ENCODE measurements at regions of chr7 and their contacts with region 1.

Region 1: DNA sequence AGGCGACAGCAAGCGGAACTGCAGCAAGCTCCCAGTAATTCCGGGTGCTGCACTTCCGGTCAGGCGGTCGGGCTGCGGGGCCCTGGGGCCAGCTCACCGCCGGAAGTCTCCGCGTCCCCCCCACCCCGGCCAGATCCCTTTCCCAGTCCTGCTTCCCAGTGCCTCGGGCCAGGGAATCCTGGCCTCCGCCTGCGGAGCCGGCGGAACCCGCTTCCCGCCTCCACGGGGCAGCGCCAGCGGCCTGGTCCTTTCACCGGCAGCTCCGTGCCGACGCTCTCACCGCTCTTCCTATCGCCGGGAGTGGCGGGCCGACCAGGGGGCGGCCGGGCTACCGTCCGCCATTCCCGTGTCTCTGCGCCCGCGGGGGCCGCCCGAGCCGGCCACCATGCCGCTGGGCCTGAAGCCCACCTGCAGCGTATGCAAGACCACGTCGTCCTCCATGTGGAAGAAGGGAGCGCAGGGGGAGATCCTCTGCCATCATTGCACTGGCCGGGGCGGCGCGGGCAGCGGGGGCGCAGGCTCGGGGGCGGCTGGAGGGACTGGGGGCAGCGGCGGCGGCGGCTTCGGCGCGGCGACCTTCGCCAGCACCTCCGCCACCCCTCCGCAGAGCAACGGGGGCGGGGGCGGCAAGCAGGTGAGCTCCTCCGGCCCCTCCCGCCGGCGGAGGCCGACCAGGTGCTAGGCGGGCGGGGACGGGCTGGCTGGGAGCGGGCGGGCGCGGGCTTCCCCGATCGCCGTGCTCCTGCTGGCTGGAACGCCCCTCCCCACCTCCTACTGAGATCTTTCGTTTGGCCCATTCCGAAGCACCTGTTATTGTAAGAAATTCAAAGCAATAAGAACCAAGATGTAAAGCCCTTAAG is at the start of gene GATAD1:
- DNase-seq: peak; percentile 94
- ATAC-seq: peak; percentile 99
- total RNA-seq, gene GATAD1: 16.1 to 18.2 TPM

Region 2: GRCh38 chr7:91880413-91881241 is 566.9 kb before region 1 on chr7 and contains the start of gene MTERF1:
- intact Hi-C with region 1: loop called in 1 of 2 experiments (anchors 10 kb)
- DNase-seq: peak; percentile 95
- ATAC-seq: peak; percentile 99 to 100
- total RNA-seq, gene MTERF1: 5.5 to 8.7 TPM

Region 3: GRCh38 chr7:91973639-91974038 is 473.9 kb before region 1 on chr7:
- intact Hi-C with region 1: no loop called
- DNase-seq: no peak
- ATAC-seq: no peak

Region 4: DNA sequence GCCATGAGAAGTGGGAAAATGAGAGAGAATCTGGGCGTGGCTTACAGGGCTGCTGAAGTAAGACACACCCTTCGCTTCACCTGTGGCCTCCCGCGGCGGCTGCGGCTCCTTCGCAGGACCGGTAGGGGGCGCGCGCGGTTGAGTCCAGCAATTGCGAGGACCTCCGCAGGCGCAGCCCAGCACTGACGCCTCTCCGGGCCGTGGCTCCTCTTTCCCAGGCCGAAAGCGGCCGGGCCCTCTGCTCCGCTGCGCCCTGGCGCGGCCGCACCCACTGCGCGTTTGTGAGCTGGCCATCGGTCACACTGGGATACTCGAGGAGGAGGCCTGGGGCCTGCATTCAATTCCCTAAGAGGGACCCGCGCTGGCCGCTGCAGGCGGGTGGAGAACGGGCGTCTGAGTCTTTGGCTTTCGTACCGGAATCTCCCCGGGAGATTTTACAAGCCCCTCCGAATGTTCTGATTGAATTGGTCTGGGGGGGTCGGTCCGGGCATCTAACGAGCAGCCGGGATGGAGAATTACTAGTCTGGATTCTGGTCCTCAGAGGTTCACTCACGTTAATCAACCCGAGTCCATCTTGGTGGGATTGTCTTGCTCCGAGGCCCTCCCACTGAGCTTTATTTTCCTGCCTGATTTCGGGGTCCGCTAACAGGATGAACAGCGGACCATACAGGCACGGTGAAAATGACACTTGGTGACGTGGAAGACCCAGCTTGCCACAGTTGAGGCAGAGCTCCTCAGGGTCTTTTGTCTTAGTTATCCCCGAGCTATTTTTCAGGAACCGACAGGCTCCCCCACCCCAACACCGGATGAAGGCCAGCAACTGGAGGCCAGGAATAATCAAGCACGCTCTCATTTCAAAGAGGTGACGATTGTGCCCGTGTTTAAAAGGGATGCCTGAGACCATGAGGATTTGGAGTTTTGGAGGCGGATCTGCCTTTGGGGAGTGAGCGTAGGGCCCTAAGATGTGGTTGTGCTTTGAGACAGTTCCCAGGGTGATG is 268.3 kb before region 1 on chr7 and contains the start of gene LRRD1:
- intact Hi-C with region 1: loop called in 1 of 2 experiments (anchors 2 kb)
- DNase-seq: peak; percentile 89
- ATAC-seq: peak; percentile 98 to 99
- total RNA-seq, gene LRRD1: 0.10 TPM in 1 of 2 donors, not detected in the other

Region 5: DNA sequence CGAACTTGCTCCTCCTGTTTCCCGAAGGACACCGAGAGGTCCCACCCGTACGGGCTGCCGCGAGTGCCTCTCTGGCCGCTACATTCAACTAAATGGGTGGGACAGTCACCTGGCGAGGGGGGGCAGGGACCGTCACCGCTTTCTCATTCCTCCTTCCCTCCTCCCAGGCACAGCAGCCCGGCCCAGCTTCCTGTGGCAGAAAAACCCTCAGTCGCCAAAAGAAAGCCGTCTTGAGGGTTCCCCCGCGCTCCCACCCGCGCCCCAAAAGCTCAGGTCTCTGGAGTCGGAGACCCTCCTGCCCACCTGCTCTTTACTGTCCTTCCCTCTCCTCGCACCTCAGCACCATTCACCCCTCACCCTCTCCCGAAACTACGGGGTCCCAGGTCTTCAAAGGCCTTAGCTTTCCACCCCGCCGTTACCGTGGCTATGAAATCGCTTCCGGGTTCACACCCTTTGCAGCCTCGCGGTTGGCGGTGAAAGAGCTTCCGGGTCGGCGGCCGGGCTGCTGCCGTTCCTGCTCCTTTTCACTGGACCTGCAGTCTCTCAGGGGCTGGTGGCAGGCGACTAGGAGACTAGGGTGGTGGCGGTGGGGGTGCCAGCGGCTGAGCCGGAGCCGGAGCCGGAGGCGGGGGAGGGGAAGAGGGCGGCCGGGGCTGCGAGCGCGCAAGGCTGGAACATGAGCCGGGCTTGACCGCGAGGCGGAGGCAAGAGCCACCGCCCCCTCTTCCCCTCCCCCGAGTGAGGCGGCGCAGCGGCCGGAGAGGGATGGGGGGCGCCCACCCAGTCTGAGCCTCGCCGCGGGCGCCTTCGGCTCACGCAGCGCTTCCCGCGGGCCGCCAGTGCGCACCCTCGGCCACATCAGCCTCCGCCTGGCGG is 201.8 kb before region 1 on chr7 and contains the starts of genes ANKIB1 and KRIT1:
- intact Hi-C with region 1: loop called in 1 of 2 experiments (anchors 10 kb)
- DNase-seq: peak; percentile 91
- ATAC-seq: peak; percentile 94 to 97
- total RNA-seq, gene ANKIB1: 44.7 to 53.8 TPM
- total RNA-seq, gene KRIT1: 22.1 to 31.6 TPM

Measured in left cardiac atrium (tissue), 4 donors.